ENCODE measurements at regions of chr4 and their contacts with region 1.

Region 1: DNA sequence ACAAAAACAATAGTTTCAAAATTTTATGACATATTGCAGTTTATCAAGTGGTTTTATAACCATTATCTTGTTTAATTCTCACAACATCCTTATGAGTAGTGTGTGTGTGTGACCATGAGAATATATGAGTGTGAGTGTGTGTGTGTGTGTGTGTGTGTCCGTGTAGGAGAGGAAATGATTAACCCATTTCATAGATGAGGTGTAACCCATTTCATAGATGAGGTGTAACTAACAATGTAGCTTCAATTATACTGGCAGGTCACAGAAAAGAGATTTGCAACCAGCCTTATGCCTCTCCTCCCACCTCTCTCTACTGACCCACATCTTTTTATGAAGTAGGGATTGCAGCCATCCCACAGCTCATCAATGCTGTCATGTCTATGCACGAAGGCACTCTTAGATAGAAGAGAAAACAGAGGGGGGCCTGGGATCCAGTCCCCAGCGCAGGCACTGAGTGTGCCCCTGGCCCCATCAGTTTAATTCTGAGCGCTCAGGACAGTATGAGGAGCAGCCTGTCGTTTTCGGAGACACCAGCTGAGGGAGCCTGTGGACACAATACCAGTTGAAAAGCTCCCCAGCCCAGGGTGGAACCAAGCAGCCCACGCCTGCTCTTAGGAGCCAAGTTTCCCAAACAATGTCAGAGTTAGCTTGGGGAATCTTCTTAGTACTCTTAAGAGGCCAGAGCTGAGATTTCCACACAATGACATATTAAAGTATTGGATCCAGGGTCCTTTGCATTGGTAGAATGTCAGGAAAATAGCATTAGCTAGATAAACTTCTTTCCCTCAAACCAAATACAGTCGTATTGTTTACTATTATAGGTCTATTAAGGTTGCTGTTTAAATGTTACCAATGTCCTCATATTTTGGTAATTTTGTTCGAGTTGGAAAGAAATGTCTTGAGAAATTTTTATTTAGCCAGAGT is 88.6 kb downstream of the PALLD start:
- DNase-seq: peak; percentile 52
- H3K4me3 ChIP-seq: no peak overlapping the region
- H3K27ac ChIP-seq: no peak overlapping the region
- H3K27me3 ChIP-seq: no peaks in the 10 kb centered on the region
- CTCF ChIP-seq: peak; percentile 85

Region 2: GRCh38 chr4:168574581-168575295 is 10.7 kb before region 1 on chr4:
- CTCF ChIA-PET with region 1: interaction called, 12 read pairs
- POLR2A ChIA-PET with region 1: no interaction called
- DNase-seq: no peak
- H3K4me3 ChIP-seq: no peak overlapping the region
- H3K27ac ChIP-seq: no peak overlapping the region
- H3K27me3 ChIP-seq: no peaks in the 10 kb centered on the region
- CTCF ChIP-seq: no peak

Region 3: GRCh38 chr4:168618577-168619265 is 33.3 kb after region 1 on chr4:
- CTCF ChIA-PET with region 1: interaction called, 13 read pairs
- POLR2A ChIA-PET with region 1: interaction called, 5 read pairs
- DNase-seq: no peak
- H3K4me3 ChIP-seq: no peak overlapping the region
- H3K27ac ChIP-seq: no peak overlapping the region
- H3K27me3 ChIP-seq: no peaks in the 10 kb centered on the region
- CTCF ChIP-seq: no peak

Region 4: GRCh38 chr4:168636506-168637196 is 51.2 kb after region 1 on chr4:
- CTCF ChIA-PET with region 1: interaction called, 24 read pairs
- POLR2A ChIA-PET with region 1: interaction called, 3 read pairs
- DNase-seq: no peak
- H3K4me3 ChIP-seq: no peak overlapping the region
- H3K27ac ChIP-seq: peak overlapping the region; percentile 78
- H3K27me3 ChIP-seq: no peaks in the 10 kb centered on the region
- CTCF ChIP-seq: no peak

Region 5: GRCh38 chr4:168688584-168688983 is 103.2 kb after region 1 on chr4:
- CTCF ChIA-PET with region 1: interaction called, 11 read pairs
- POLR2A ChIA-PET with region 1: no interaction called
- DNase-seq: no peak
- H3K4me3 ChIP-seq: no peak overlapping the region
- H3K27ac ChIP-seq: no peak overlapping the region
- H3K27me3 ChIP-seq: no peaks in the 10 kb centered on the region
- CTCF ChIP-seq: no peak

Region 6: DNA sequence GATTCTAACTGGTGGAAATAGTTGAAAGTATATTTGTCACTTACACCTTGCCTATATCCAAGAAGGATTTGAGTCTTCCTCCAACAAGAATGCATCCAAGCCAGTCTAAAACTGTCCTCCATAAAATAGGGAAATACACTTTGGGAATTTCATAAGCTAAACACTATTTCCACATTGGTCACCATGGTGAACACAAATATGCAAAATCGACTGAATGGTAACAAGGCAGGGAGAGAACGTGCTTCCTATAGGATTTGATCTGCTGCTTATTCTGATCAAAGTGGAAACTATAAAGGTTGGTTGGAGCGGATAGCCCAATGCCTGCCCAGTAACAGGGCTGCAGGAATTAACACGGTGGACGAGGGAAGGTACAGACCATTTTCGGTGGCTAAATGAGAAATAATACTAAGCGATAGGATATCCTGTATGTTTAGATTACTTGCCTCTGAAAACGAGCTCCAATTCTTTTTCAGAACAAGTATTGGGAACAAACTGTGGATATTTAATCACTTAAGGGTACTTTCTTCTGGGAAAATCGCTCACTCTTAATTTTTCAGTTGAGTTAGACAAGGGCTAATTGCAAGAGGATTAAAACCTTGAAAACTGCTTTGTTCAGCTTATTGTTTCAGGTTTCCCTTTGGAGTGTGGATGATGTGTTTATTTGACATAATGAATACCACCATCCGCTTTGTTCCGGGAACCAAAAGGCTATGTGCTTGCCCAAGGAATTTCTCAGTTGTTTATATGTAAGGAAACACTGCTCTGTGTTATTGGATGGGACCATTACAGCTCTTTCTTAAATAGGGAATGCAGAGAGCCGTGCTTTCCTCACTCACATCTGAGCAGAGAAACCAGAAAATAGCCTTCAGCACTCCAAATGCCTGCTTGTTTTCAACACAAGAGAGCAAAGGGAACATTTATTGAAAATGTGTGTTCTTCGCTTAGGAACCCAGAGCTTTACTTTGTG is 230.2 kb after region 1 on chr4:
- CTCF ChIA-PET with region 1: interaction called, 10 read pairs
- POLR2A ChIA-PET with region 1: no interaction called
- DNase-seq: peak; percentile 86
- H3K4me3 ChIP-seq: peak overlapping the region; percentile 30
- H3K27ac ChIP-seq: peak overlapping the region; percentile 89
- H3K27me3 ChIP-seq: no peaks in the 10 kb centered on the region
- CTCF ChIP-seq: no peak

Measured in AG04450 (cell line).